AG04450 (cell line): ENCODE measurements at regions of chr11 and their contacts with region 1.

Region 1: GRCh38 chr11:128157423-128158298 is 429.7 kb downstream of the ETS1 start:
- DNase-seq: peak; percentile 41
- H3K4me3 ChIP-seq: peak overlapping the region; percentile 38; the same call in 1 of the 2 replicates
- H3K27ac ChIP-seq: no peak overlapping the region
- H3K27me3 ChIP-seq: peaks cover 12% of the 10 kb centered on the region
- CTCF ChIP-seq: peak; percentile 82

Region 2: DNA sequence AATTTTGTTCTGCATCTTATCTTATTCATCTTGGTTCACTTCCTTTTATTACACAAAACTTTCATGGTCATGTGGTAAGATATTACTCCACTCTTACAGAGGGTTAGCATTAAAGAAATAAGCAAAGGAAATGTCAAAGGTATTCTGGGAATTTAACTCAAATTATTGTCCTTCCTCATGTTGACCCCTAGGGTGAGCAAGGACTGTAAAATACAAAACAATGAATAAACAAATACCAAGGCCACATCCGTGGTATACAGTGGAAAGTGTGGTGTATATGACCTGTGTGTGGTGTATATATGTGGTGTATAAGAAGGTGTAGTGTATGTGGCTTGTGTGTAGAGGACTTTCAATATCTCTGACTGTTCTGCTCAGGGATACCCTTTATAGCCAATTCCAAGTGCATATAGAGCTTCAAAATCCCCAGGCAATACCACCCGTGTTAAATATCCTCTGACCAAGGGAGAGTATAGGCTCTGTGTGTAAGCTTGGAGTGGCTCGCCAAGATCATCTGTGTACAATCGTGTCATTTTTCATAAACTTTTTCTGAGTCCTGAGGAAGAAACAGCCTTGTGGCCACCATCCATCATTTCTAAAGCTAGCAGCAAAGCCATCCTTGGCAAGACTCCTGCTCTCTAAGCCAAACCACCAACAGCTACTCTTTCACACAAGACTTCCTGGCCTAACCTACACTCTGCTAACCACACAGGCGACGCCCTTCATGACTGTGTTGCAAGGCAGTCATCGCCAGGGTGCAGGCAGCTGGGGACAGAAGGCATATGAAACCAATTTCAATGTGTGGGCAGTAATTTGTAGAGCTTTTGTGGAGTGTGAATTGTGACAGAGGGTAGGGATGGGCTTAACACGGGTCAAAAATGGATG is 118.3 kb before region 1 on chr11:
- CTCF ChIA-PET with region 1: interaction called, 69 read pairs
- POLR2A ChIA-PET with region 1: no interaction called
- DNase-seq: no peak
- H3K4me3 ChIP-seq: no peak overlapping the region
- H3K27ac ChIP-seq: no peak overlapping the region
- H3K27me3 ChIP-seq: peaks cover 5% of the 10 kb centered on the region
- CTCF ChIP-seq: peak; percentile 18; the same call in 1 of the 2 replicates

Region 3: GRCh38 chr11:128135451-128135850 is 22.2 kb before region 1 on chr11:
- CTCF ChIA-PET with region 1: interaction called, 13 read pairs
- POLR2A ChIA-PET with region 1: no interaction called
- DNase-seq: no peak
- H3K4me3 ChIP-seq: no peak overlapping the region
- H3K27ac ChIP-seq: no peak overlapping the region
- H3K27me3 ChIP-seq: peaks cover 2% of the 10 kb centered on the region
- CTCF ChIP-seq: no peak

Region 4: GRCh38 chr11:128279866-128280265 is 122.2 kb after region 1 on chr11:
- CTCF ChIA-PET with region 1: interaction called, 19 read pairs
- POLR2A ChIA-PET with region 1: no interaction called
- DNase-seq: no peak
- H3K4me3 ChIP-seq: no peak overlapping the region
- H3K27ac ChIP-seq: no peak overlapping the region
- H3K27me3 ChIP-seq: no peaks in the 10 kb centered on the region
- CTCF ChIP-seq: no peak

Region 5: DNA sequence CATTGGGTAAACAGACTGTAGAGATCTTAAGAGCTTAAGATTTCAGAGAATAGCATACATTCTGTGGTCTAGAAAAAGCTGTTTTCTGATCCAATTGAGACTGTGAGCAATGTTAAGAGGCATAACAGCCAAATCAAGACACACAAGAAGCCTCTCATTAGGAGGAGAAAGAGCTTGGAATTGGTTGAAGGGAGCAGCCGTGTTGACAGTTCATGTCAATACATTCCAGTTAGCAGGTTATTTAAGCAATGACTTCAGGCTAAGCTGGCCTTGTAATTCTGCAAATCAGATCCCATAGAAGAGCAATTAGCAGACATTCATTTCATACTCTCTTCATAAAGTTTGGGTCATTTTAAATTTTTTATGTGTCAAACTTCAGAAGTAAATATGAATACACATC is 378.8 kb after region 1 on chr11:
- CTCF ChIA-PET with region 1: no interaction called
- POLR2A ChIA-PET with region 1: no interaction called
- DNase-seq: no peak
- H3K4me3 ChIP-seq: no peak overlapping the region
- H3K27ac ChIP-seq: no peak overlapping the region
- H3K27me3 ChIP-seq: no peaks in the 10 kb centered on the region
- CTCF ChIP-seq: no peak

Region 6: DNA sequence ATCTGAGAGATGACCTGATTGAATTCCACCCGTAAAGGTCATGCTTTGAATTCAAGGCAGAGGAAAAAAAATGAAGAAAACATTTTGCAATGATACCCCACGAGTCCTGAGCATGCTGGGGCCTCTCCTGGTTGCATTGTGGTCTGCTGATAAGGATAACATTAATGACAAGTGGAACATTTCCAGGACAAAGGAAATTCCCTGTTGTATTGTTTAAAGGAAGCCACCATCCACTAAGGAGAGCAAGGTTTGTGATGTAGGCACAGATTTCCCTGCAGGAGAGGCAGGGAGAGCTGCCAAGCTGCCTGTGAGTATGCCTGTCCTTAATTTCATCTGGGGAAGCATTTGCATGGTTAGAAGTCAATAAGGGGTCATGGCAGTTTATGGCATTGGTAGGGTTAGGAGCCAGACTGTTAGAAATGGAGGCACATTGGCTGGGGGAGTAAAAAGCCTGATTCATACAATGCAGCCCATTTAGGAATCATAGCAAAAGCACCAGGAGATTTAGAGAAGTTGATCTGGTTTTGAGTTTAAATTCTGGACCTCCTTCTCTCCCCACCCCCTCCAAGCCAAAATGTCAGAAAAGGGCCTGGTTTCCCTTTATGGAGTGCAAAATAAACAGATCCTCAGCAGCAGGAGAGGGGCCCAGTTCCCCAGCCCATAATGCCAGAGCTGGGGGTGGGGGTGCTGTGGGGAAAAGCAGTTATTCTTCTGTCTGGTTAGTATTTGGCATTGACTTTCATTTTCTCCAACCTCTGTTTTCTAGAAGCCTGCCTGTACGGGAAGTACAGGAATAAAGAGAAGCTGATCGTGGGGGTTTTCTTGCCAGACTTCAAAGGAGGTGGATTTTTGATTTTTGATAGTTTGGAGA is 558.3 kb after region 1 on chr11:
- CTCF ChIA-PET with region 1: interaction called, 10 read pairs
- POLR2A ChIA-PET with region 1: no interaction called
- DNase-seq: no peak
- H3K4me3 ChIP-seq: peak overlapping the region; percentile 11; the same call in 1 of the 2 replicates
- H3K27ac ChIP-seq: peak overlapping the region; percentile 73
- H3K27me3 ChIP-seq: peaks cover 3% of the 10 kb centered on the region
- CTCF ChIP-seq: no peak

Region 7: GRCh38 chr11:128848815-128849455 is 691.3 kb after region 1 on chr11:
- CTCF ChIA-PET with region 1: interaction called, 24 read pairs
- POLR2A ChIA-PET with region 1: no interaction called
- DNase-seq: no peak
- H3K4me3 ChIP-seq: no peak overlapping the region
- H3K27ac ChIP-seq: no peak overlapping the region
- H3K27me3 ChIP-seq: peaks cover 18% of the 10 kb centered on the region
- CTCF ChIP-seq: peak; percentile 65